WTC11 (cell line): ENCODE measurements at regions of chr1 and their contacts with region 1.

Region 1: DNA sequence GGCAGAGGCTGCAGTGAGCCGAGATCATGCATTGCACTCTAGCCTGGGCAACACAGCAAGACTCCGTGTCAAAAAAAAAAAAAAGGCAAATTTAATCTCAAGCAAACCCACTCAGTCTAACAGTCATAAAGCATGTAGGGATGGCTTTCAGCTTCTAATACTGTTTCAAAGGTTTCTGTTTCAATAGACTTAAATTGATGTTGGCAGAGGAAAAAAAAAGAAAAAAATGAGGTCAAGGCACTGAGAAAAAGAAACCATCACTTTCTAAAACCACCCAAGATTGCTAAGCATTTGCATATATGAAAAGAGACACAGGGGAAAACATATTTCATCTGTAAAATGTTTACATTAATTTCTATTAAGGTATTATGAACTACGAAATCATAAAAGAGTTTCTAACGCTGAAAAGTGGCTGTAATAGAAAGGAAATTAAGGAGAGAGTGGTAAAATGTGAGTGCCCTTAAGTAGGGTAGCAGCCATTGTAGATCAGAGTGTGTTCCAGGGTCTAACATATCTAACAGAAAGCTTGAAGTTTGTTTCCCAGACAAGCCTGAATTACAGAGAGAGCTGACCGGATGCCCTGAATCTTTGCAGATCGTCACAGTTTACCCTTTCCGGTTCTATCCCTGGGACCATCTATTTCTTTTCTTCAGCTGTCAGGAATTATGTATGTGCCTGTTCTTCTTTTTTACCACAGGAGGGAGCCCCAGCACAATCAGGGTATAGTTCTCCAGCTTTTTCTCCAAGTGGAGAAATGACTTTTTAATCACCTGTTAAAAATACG is 70.0 kb downstream of the PLD5 start:
- DNase-seq: no peak
- ATAC-seq: peak; percentile 86
- H3K4me3 Mint-ChIP-seq: no peak overlapping the region
- H3K27ac Mint-ChIP-seq: no peak overlapping the region
- H3K4me1 Mint-ChIP-seq: peaks cover 60% of the 10 kb centered on the region
- H3K27me3 Mint-ChIP-seq: no peaks in the 10 kb centered on the region
- CTCF ChIP-seq: peak; percentile 46

Region 2: DNA sequence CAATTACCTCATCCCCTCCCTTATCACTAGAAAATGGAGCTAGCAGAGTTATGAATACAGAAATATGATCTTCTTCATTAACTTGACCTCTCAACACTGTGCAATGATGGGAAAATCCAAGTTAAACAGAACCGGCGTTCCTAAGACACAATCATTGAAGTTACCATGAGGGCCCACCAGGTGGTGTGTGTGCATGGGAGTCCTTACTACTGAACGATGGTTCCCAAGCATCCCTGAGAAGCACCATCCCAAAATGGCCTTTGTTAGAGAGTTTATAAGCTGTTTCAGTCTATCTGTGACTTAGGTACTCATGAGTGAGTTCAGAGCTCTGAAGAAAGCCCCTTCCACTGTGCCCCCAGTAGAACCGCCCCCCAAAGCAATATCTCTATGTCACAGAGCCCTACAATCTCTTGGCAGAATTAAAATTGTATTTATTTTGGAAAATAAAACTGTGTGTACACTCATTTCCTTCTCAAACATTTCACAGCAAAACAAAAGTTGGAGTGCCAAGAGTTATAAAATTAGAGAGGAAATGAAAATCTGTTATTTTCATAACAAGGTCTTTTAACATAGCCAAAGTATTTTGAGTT is 13.2 kb after region 1 on chr1:
- CTCF ChIA-PET with region 1: interaction called, 14 read pairs
- POLR2A ChIA-PET with region 1: no interaction called
- DNase-seq: peak; percentile 69
- ATAC-seq: peak; percentile 98
- H3K4me3 Mint-ChIP-seq: no peak overlapping the region
- H3K27ac Mint-ChIP-seq: no peak overlapping the region
- H3K4me1 Mint-ChIP-seq: no peaks in the 10 kb centered on the region
- H3K27me3 Mint-ChIP-seq: no peaks in the 10 kb centered on the region
- CTCF ChIP-seq: peak; percentile 58; the same call in 1 of the 2 replicates

Region 3: GRCh38 chr1:242605521-242605920 is 151.1 kb after region 1 on chr1:
- CTCF ChIA-PET with region 1: no interaction called
- POLR2A ChIA-PET with region 1: no interaction called
- DNase-seq: no peak
- ATAC-seq: no peak
- H3K4me3 Mint-ChIP-seq: no peak overlapping the region
- H3K27ac Mint-ChIP-seq: no peak overlapping the region
- H3K4me1 Mint-ChIP-seq: peaks cover 18% of the 10 kb centered on the region
- H3K27me3 Mint-ChIP-seq: no peaks in the 10 kb centered on the region
- CTCF ChIP-seq: no peak

Region 4: DNA sequence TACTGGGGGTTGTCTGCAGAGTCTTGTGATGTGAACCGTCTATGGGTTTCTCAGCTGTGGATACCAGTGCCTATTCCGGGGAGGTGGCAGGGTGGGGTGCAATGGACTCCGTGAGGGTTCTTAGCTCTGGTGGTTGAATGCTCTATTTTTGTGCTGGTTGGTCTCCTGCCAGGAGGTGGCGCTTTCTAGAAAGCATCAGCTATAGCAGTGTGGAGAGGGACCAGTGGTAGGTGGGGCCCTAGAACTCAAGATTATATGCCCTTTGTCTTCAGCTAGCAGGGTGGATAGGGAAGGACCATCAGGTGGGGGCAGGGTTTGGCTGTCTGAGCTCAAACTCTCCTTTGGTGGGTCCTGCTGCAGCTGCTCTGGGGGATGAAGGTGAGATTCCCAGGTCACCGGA is 197.4 kb after region 1 on chr1:
- CTCF ChIA-PET with region 1: interaction called, 15 read pairs
- POLR2A ChIA-PET with region 1: no interaction called
- DNase-seq: peak; percentile 80
- ATAC-seq: peak; percentile 97
- H3K4me3 Mint-ChIP-seq: no peak overlapping the region
- H3K27ac Mint-ChIP-seq: no peak overlapping the region
- H3K4me1 Mint-ChIP-seq: peaks cover 12% of the 10 kb centered on the region
- H3K27me3 Mint-ChIP-seq: no peaks in the 10 kb centered on the region; the same call in 1 of the 2 replicates
- CTCF ChIP-seq: peak; percentile 31; the same call in 1 of the 2 replicates